Heart left ventricle (tissue), 16 donors: ENCODE measurements at regions of chr5 and their contacts with region 1.

Region 1: DNA sequence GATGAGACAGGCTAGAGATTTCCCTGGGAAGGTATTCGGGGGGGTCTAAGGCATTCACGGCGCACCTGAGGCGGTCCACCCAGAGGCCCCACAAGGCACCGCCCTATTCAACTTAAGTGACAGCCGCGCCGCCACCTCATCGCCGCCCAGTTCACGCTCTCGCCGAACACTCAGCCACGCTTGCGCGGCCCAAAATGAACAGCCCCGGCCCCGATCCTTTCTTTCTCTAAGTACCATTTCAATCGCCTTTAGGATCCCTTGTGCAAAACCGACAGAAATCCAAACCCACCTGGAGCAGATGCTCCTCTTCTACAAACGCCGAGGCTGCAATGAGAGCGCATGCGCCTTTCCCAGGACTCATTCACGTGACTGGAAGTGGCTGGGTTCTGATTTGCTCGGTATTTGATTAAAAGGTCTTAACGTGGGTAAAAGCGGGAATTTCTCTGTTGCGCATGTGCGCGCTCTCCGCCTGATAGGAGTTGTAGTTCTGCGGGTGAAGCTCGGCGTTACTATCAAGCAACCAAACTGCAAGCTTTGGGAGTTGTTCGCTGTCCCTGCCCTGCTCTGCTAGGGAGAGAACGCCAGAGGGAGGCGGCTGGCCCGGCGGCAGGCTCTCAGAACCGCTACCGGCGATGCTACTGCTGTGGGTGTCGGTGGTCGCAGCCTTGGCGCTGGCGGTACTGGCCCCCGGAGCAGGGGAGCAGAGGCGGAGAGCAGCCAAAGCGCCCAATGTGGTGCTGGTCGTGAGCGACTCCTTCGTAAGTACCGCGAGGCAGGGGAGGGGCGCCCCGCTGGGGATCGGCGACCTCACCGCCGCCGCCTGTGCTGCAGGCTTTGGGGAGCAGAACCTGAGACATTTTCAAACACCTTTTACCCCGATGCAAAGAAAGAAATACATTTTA is at the starts of genes ARSK and SKIC3:
- DNase-seq: peak; percentile 93 to 96 (median 95)
- ATAC-seq: peak; percentile 97 to 98 (median 98)
- H3K4me3 ChIP-seq: peak within 1 kb of the TSS; percentile 56 to 92 (median 86)
- H3K27ac ChIP-seq: peak within 1 kb of the TSS; percentile 29 to 94 (median 84)
- H3K4me1 ChIP-seq: peaks cover 3 to 26% (median 14%) of the 10 kb centered on the region in 12 donors
- H3K27me3 ChIP-seq: no peaks in the 10 kb centered on the region
- CTCF ChIP-seq: peak in 10 of 12 donors; percentile 10 to 64 (median 39)
- POLR2A ChIP-seq: peak in 1 of 2 donors; percentile 87
- total RNA-seq, gene ARSK: 2.3 to 5.7 (median 3.5) TPM
- total RNA-seq, gene SKIC3: 40.3 to 80.2 (median 68.9) TPM

Region 2: GRCh38 chr5:95620030-95620869 is 65.4 kb after region 1 on chr5 and contains the start of gene GPR150:
- intact Hi-C with region 1: loop called in 1 of 10 experiments (anchors 2 kb)
- DNase-seq: peak; percentile 26 to 82 (median 54)
- ATAC-seq: peak; percentile 46 to 74 (median 66)
- H3K4me3 ChIP-seq: peak within 1 kb of the TSS; percentile 30 to 74 (median 58)
- H3K27ac ChIP-seq: peak within 1 kb of the TSS in 1 of 12 donors; percentile 53
- H3K4me1 ChIP-seq: peaks cover 0 to 36% (median 17%) of the 10 kb centered on the region in 12 donors
- H3K27me3 ChIP-seq: no peaks in the 10 kb centered on the region
- CTCF ChIP-seq: peak in 1 of 12 donors; percentile 3
- POLR2A ChIP-seq: no peak
- total RNA-seq, gene GPR150: 0.13 to 0.25 (median 0.17) TPM in 3 of 9 donors, not detected in the others

Region 3: GRCh38 chr5:95631991-95632675 is 77.2 kb after region 1 on chr5:
- intact Hi-C with region 1: loop called in 2 of 10 experiments (anchors 10 kb)
- DNase-seq: no peak
- ATAC-seq: peak in 3 of 4 donors; percentile 45 to 80 (median 58)
- H3K4me3 ChIP-seq: no peak overlapping the region
- H3K27ac ChIP-seq: peak overlapping the region in 1 of 12 donors; percentile 70
- H3K4me1 ChIP-seq: peaks cover 0 to 34% (median 0%) of the 10 kb centered on the region in 12 donors
- H3K27me3 ChIP-seq: no peaks in the 10 kb centered on the region
- CTCF ChIP-seq: no peak
- POLR2A ChIP-seq: no peak

Region 4: GRCh38 chr5:97183100-97183929 is 1628.4 kb after region 1 on chr5 and contains the start of gene RIOK2:
- intact Hi-C with region 1: loop called in 1 of 10 experiments (anchors 10 kb)
- DNase-seq: peak; percentile 93 to 96 (median 96)
- ATAC-seq: peak; percentile 96 to 98 (median 97)
- H3K4me3 ChIP-seq: peak within 1 kb of the TSS; percentile 48 to 97 (median 78)
- H3K27ac ChIP-seq: peak within 1 kb of the TSS; percentile 88 to 94 (median 91)
- H3K4me1 ChIP-seq: peaks cover 0 to 32% (median 20%) of the 10 kb centered on the region in 12 donors
- H3K27me3 ChIP-seq: no peaks in the 10 kb centered on the region
- CTCF ChIP-seq: no peak
- POLR2A ChIP-seq: peak in 1 of 2 donors; percentile 56
- total RNA-seq, gene RIOK2: 8.2 to 23.6 (median 16.9) TPM